ENCODE measurements at regions of chr1 and their contacts with region 1.

Region 1: DNA sequence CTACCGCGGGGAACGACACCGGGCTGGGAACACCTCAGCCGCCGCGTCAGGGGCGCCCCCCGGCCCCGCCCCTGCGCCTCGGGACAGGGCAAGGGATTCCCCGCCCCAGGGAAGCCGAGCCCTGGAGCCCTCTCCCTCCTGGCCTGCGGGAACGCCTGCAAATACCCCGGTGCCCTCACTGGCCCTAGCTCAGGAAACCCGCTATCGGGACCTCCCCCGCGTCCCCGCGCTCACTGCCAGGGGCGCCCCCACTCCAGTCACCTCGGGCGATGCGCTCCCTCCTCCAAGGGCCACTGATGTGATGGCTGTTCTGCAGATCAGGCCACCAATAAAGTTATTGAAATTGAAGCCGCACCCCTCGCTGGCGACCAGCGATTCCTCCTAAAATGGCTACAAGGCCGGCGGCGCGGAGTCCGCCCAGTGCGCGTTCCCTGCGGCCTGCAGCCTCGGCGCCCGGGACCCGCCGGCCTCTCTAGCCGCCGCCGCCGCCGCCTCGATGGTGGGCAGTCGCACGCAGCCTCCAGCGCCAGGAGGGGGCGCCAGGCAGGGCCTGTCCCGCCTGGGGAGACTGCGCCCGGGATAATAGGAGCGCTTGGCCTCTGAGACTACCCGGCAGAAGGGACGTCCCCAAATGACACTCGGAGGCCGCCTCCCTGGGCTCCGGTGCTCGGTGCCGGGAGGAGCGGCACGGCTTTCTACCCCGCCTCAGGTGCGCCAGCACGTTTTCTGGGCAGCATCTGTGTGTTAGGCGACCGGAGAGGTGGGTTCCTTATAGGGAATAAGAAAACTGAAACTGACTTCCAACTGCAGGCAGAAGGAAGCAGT is at the start of gene PRKAB2:
- DNase-seq: peak; percentile 98
- ATAC-seq: peak; percentile 97
- total RNA-seq, gene PRKAB2: 49.0 TPM

Region 2: DNA sequence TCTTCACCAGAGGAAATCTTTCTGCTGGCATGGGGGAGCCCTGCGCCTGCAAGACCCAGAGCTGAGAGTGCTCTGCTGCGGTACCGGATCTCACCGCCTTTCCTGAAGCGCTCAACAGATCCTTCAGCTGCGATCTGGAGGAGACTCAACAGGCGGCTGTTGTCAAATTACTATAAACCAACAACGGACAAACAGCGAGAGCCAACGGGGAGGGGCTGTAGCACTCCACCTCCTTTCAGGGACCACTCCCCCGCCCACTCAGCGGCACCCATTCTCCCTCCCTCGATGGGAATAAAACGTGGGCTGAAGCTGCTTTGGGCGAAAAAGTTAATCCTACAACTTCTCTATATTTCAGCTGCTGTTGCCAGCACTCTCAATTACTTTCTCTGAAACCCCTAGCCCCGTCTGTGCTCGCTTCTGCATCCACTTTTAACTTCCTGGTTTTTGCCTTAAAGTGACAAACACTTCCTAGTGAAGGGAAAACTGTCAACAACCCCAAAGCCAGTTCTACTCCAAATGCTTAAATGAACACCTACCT is 52.9 kb after region 1 on chr1 and contains the start of gene FMO5:
- intact Hi-C with region 1: no loop called
- DNase-seq: peak; percentile 82
- ATAC-seq: peak; percentile 93
- total RNA-seq, gene FMO5: 8.5 TPM

Region 3: GRCh38 chr1:147242439-147243227 is 70.3 kb after region 1 on chr1 and contains the start of gene CHD1L:
- intact Hi-C with region 1: loop called (anchors 1 kb)
- DNase-seq: peak; percentile 99
- ATAC-seq: peak; percentile 98
- total RNA-seq, gene CHD1L: 8.2 TPM

Region 4: GRCh38 chr1:147389532-147390524 is 217.4 kb after region 1 on chr1:
- intact Hi-C with region 1: no loop called
- DNase-seq: no peak
- ATAC-seq: peak; percentile 22